Mammary epithelial cell (primary cell): ENCODE measurements at regions of chr1 and their contacts with region 1.

Region 1: DNA sequence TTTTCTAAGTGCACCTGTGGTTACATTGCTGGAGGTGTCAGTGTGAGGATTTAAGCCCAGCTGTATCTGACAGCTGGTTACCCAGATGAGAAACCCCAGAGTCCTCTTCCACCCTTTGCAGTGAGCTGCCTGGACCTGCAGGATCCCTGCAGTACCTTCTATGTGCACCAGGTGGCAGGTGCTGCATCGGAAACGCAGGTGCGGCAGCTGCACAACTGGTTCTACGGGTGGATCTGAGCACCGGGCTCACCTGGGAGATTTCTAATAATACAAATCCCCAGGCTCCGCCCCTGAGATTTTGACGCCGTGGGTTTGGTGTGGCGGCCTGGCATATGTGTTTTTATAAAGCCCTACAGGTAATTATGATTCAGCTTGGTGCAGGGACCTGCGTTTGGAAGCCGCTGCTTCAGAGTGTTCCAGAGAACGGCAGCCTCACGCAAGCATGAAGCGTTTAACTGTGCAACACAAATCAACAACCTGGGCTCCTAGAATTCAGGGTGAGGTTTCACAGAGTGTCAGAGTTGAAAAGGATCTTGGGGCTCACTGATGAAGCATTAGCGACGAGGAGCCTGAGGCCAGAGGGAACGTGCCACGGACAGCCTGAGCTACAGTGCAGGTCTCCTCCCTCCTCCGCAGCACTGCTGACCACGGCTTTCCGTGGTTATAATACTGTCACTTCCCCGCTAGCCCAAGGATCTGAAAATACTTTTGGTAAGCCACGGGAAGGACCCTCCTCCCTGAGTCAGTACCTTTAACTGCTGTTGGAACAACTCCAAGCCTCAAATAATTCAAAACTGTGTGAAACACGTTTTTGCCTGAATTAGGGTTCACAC is 96.7 kb upstream of the TRABD2B start:
- DNase-seq: peak; percentile 90
- H3K4me3 ChIP-seq: peak overlapping the region in 1 of 3 experiments; percentile 2
- H3K27ac ChIP-seq: no peak overlapping the region
- H3K4me1 ChIP-seq: peaks cover 5% of the 10 kb centered on the region
- H3K27me3 ChIP-seq: peaks cover 18% of the 10 kb centered on the region
- CTCF ChIP-seq: peak; percentile 98

Region 2: GRCh38 chr1:47656719-47657685 is 436.9 kb before region 1 on chr1:
- CTCF ChIA-PET with region 1: no interaction called
- dilution Hi-C with region 1: no loop called
- in situ Hi-C with region 1: no loop called
- intact Hi-C with region 1: no loop called
- DNase-seq: no peak
- H3K4me3 ChIP-seq: no peak overlapping the region
- H3K27ac ChIP-seq: no peak overlapping the region
- H3K4me1 ChIP-seq: no peaks in the 10 kb centered on the region
- H3K27me3 ChIP-seq: no peaks in the 10 kb centered on the region
- CTCF ChIP-seq: no peak

Region 3: GRCh38 chr1:47996406-47997226 is 97.3 kb before region 1 on chr1:
- CTCF ChIA-PET with region 1: no interaction called
- dilution Hi-C with region 1: no loop called
- in situ Hi-C with region 1: no loop called
- intact Hi-C with region 1: no loop called
- DNase-seq: no peak
- H3K4me3 ChIP-seq: peak overlapping the region; percentile 57 to 75 (median 69)
- H3K27ac ChIP-seq: no peak overlapping the region
- H3K4me1 ChIP-seq: peaks cover 23% of the 10 kb centered on the region
- H3K27me3 ChIP-seq: no peaks in the 10 kb centered on the region
- CTCF ChIP-seq: no peak

Region 4: DNA sequence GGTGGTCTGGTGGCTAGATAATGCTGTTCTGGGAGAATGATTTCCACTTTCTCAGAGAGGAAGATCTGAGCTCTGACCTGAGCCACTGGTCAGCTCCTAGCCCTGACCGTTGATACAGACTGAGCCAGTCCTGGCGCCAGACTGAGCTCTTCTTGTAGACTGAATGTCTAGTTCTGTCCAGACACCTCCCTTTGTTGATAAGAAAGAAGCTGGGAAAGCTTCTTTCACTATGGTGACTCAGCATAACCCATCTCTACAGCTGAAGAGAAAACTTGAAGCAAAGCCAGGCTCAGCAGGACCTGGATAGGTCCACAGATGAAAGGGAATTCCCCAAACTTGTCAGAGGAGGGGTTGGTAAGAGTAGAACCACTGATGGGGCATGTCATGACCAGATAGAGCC is 86.9 kb before region 1 on chr1:
- CTCF ChIA-PET with region 1: no interaction called
- dilution Hi-C with region 1: no loop called
- in situ Hi-C with region 1: no loop called
- intact Hi-C with region 1: no loop called
- DNase-seq: peak; percentile 92
- H3K4me3 ChIP-seq: no peak overlapping the region
- H3K27ac ChIP-seq: no peak overlapping the region
- H3K4me1 ChIP-seq: peaks cover 10% of the 10 kb centered on the region
- H3K27me3 ChIP-seq: no peaks in the 10 kb centered on the region
- CTCF ChIP-seq: no peak

Region 5: DNA sequence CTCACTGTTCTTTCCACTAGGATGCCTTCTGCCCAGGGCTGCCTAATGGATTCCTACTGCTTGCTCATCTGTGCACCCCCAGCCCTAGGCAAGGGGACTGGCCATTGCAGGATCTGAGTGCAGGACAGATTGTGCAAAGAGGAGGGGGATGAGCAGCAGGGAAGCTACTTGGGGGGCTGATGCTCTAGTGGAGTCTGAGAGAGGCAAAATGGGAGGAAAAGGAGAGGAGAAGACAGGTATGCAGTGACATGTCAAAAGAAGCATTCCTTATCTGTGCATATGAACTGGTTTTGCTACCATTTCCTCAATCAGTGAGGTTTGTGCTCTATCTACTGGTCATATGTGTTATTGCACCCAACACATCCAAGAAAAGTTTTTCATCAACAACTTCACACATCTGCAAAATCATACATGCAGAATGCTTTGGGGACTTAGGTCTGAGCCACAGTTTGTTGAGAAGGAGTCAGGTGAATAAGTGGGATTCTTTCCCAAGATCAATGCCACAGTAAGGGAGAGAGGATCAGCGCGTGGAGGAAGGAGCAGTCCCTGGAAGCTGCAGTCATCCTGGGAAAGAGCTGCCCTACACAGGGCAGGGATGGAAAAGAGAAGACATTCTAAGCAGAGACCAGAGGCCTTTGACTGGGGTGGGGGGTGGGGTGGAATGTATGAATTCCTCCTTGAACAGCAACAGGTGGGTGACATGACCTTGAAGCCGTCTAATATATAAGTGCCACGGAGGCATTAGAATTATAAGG is 143.0 kb after region 1 on chr1:
- CTCF ChIA-PET with region 1: no interaction called
- dilution Hi-C with region 1: no loop called
- in situ Hi-C with region 1: no loop called
- intact Hi-C with region 1: loop called (anchors 1 kb)
- DNase-seq: peak; percentile 34
- H3K4me3 ChIP-seq: no peak overlapping the region
- H3K27ac ChIP-seq: no peak overlapping the region
- H3K4me1 ChIP-seq: no peaks in the 10 kb centered on the region
- H3K27me3 ChIP-seq: no peaks in the 10 kb centered on the region
- CTCF ChIP-seq: peak; percentile 77 to 86